GM18951 (cell line): ENCODE measurements at regions of chr12 and their contacts with region 1.

Region 1: GRCh38 chr12:14260011-14260993 is 105.2 kb upstream of the ATF7IP start:
- POLR2A ChIP-seq: no peak

Region 2: DNA sequence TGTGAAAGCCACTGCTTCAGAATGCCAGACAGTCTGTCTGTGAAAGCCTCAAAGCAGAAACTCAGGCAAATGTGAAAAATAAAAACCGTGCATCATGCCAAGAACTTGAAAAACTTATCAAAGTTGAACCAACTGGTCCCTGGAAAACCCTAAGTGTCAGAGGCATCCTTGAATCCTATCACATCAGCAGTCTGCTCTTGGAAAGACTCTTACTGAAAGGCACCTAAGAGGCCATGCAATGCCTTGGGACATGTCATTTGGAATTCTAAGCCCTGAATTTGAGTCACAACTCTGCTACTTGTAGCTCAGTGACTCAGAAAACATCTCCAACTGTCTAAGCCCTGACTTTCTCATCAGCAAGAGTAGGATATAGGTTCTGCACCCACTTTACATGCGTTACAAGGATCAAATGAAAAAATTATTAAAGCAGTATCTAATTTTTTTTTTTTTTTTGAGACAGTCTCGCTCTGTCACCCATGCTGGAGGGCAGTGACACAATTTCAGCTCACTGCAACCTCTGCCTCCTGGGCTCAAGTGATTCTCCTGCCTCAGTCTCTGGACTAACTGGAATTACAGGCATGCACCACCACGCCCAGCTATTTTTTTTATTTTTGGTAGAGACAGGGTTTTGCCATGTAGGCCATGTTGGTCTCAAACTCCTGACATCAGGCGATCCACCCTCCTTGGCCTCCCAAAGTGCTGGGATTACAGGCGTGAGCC is 216.3 kb before region 1 on chr12:
- in situ Hi-C with region 1: no loop called
- POLR2A ChIP-seq: no peak

Region 3: DNA sequence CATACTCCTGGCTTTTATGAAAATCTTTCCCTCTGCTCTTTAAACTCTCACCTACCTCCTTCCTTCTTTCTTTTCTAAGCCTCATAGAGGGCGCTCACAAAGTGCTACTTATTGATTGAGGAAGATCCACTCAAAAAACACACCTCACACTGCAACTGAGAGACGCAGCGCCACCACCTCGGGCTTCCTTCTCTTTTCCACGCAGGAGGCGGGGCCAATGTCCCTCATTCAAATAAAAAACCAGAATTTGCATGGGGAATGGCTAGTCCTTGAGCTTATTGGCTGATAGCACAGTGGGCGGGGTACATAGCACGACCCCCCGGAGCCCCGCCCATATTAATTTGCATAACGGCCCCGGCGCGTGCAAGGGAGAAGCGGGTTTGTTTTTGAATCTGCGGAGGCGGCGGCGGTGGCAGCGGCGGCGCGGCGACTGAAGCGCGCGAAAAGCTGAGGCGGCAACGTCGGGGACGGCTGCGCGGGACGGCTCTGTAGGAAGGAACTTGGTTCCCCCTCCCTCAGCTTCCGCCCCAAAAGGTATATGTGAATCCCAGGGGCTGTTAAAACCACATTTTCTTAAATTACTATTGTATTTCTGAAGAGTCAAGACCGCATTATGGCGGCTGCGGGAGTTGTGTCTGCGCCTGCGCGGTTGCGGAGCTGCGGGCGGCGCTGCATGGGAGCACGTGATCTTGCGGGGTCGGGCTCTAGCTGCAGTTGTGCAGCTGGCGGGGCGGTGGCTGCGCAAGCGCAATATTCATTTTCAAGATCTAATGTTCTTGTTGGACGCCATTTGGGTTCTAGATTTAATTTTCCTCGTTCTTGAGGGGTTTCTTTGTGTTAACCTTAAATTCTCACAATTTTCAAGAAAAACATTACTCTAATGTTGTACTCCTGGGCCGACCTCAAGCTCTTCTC is 105.2 kb after region 1 on chr12 and contains the start of gene ATF7IP:
- in situ Hi-C with region 1: loop called (anchors 10 kb)
- POLR2A ChIP-seq: peak; percentile 78